Activated CD4-positive, alpha-beta memory T cell treated with anti-CD3 and anti-CD28 coated beads for 36 hours (primary cell): ENCODE measurements at regions of chr1 and their contacts with region 1.

Region 1: DNA sequence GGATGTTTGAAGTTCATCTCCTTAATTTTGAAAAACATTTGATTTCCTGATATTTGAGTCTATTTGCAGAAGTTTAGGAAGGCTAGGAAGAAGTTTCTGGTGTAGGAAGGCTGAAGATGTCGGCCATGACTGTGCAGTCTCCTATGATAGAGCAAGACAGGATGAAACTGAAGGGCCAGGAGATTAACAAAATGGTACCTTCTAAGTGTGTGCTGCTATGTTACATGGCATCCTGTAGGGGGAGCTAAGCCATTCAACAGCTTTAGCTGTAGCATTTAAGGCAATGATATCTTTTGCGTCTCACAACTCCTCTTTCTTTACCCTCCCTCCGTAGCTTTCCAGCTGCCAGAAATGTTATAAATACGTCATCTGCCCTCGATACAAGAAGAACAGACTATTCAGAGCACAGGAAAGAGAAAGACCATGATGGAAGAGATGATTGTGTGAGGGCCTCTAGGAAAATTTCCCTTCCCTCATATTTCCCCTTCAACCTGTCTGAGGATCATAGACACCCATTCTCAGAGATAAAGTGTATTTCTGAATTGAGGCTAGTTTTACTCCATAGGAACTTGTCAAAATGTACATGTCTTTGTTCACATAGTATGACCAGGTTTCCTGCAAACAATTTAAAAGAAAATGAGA is 61.1 kb downstream of the XCL1 start:
- DNase-seq: no peak
- H3K4me3 Mint-ChIP-seq: no peak overlapping the region
- H3K27ac Mint-ChIP-seq: no peak overlapping the region
- H3K4me1 Mint-ChIP-seq: no peaks in the 10 kb centered on the region
- H3K27me3 Mint-ChIP-seq: peaks cover 10% of the 10 kb centered on the region

Region 2: DNA sequence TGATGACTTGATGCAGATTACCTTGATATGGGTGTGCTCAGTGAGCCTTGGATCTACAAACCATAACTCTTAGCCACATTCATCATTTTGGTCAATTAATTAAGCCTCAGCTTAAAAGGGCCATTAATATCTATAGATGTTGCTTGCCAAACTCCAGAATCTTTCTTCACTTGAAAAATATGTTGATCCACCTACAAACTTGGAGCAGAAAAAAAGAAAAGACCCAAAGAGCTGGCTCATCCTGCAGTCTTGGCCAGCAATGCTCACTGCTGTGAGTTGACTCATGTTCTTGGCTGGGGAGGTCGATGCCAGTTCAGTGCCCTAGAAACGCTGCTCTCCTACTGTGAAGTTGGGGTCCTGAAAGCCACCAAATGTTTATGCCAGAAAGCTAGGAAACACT is 16.1 kb after region 1 on chr1:
- CTCF ChIA-PET with region 1: interaction called, 10 read pairs
- POLR2A ChIA-PET with region 1: no interaction called
- intact Hi-C with region 1: no loop called
- DNase-seq: no peak
- H3K4me3 Mint-ChIP-seq: no peak overlapping the region
- H3K27ac Mint-ChIP-seq: no peak overlapping the region
- H3K4me1 Mint-ChIP-seq: no peaks in the 10 kb centered on the region
- H3K27me3 Mint-ChIP-seq: peaks cover 4% of the 10 kb centered on the region

Region 3: GRCh38 chr1:168664069-168664834 is 26.8 kb after region 1 on chr1:
- CTCF ChIA-PET with region 1: no interaction called
- POLR2A ChIA-PET with region 1: no interaction called
- intact Hi-C with region 1: no loop called
- DNase-seq: no peak
- H3K4me3 Mint-ChIP-seq: no peak overlapping the region
- H3K27ac Mint-ChIP-seq: no peak overlapping the region
- H3K4me1 Mint-ChIP-seq: no peaks in the 10 kb centered on the region
- H3K27me3 Mint-ChIP-seq: peaks cover 2% of the 10 kb centered on the region